ENCODE measurements at regions of chr14 and their contacts with region 1.

Region 1: GRCh38 chr14:37565550-37565949 is 29.5 kb downstream of the FOXA1 start:
- DNase-seq: peak in 1 of 2 experiments; percentile 54
- H3K4me3 ChIP-seq: peak overlapping the region; percentile 48
- H3K4me3 Mint-ChIP-seq: peak overlapping the region; percentile 88
- H3K27ac Mint-ChIP-seq: peak overlapping the region; percentile 84
- H3K4me1 ChIP-seq: peaks cover 68% of the 10 kb centered on the region
- H3K4me1 Mint-ChIP-seq: peaks cover 38% of the 10 kb centered on the region
- H3K27me3 ChIP-seq: no peaks in the 10 kb centered on the region
- H3K27me3 Mint-ChIP-seq: no peaks in the 10 kb centered on the region
- CTCF ChIP-seq: peak; percentile 67 to 68

Region 2: DNA sequence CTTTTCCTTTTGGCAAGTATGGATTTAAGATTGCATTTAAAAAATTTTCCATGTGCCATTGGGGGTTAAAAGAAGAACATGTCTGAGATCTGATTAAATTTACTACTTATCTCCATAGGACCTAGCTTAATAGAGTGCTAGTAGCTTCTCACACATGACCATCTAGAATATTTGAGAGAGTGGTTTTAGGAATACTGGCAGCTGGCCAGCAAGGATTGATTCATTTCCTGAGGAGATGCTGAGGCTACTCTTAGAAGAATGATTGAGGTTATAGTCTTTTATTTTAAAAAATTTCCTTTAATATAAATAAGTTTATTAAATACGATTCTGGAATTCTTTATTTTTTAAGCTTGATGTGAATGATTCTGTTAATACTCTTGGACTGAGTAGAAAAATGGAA is 311.6 kb before region 1 on chr14:
- CTCF ChIA-PET with region 1: no interaction called
- POLR2A ChIA-PET with region 1: no interaction called
- intact Hi-C with region 1: loop called (anchors 1 kb)
- DNase-seq: no peak
- H3K4me3 ChIP-seq: no peak overlapping the region
- H3K4me3 Mint-ChIP-seq: no peak overlapping the region
- H3K27ac Mint-ChIP-seq: no peak overlapping the region
- H3K4me1 ChIP-seq: peaks cover 35% of the 10 kb centered on the region
- H3K4me1 Mint-ChIP-seq: peaks cover 18% of the 10 kb centered on the region
- H3K27me3 ChIP-seq: no peaks in the 10 kb centered on the region
- H3K27me3 Mint-ChIP-seq: no peaks in the 10 kb centered on the region
- CTCF ChIP-seq: no peak

Region 3: DNA sequence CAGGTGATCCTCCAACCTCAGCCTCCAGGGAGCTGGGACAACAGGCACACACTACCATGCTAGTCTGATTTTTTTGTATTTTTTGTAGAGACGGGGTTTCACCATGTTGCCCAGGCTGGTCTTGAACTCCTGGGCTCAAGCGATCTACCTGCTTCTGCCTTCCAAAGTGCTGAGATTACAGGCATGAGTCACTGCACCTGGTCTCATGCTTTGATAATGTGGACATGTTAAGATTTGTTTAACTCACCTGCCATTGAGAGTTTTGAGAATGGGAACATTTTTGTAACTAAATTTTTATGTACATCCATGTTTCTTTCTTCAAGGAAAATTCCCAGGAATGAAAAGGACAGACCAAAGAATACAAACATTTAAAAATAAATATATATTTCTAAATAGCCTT is 246.6 kb before region 1 on chr14:
- CTCF ChIA-PET with region 1: no interaction called
- POLR2A ChIA-PET with region 1: no interaction called
- intact Hi-C with region 1: no loop called
- DNase-seq: no peak
- H3K4me3 ChIP-seq: no peak overlapping the region
- H3K4me3 Mint-ChIP-seq: no peak overlapping the region
- H3K27ac Mint-ChIP-seq: no peak overlapping the region
- H3K4me1 ChIP-seq: peaks cover 10% of the 10 kb centered on the region; the same call in 1 of the 2 replicates
- H3K4me1 Mint-ChIP-seq: peaks cover 10% of the 10 kb centered on the region
- H3K27me3 ChIP-seq: no peaks in the 10 kb centered on the region
- H3K27me3 Mint-ChIP-seq: no peaks in the 10 kb centered on the region
- CTCF ChIP-seq: no peak

Region 4: DNA sequence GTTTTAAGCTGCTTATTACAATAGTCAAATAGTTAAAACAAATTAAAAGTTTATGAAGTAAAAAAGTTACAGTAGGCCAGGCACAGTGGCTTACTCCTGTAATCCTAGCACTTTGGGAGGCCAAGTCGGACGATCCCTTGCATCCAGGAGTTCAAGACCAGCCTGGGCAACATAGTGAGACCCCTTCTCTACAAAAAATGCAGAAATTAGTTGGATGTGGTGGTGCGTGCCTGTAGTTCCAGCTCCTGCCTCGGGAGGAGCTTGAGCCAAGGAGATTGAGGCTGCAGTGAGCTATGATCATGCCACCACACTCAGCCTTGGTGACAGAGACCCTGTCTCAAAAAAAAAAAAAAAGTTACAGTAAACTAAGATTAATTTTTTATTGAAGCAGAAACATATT is 225.2 kb before region 1 on chr14:
- CTCF ChIA-PET with region 1: no interaction called
- POLR2A ChIA-PET with region 1: no interaction called
- intact Hi-C with region 1: loop called (anchors 5 kb)
- DNase-seq: peak in 1 of 2 experiments; percentile 6
- H3K4me3 ChIP-seq: no peak overlapping the region
- H3K4me3 Mint-ChIP-seq: no peak overlapping the region
- H3K27ac Mint-ChIP-seq: no peak overlapping the region
- H3K4me1 ChIP-seq: no peaks in the 10 kb centered on the region
- H3K4me1 Mint-ChIP-seq: peaks cover 2% of the 10 kb centered on the region
- H3K27me3 ChIP-seq: no peaks in the 10 kb centered on the region
- H3K27me3 Mint-ChIP-seq: no peaks in the 10 kb centered on the region
- CTCF ChIP-seq: no peak

Region 5: DNA sequence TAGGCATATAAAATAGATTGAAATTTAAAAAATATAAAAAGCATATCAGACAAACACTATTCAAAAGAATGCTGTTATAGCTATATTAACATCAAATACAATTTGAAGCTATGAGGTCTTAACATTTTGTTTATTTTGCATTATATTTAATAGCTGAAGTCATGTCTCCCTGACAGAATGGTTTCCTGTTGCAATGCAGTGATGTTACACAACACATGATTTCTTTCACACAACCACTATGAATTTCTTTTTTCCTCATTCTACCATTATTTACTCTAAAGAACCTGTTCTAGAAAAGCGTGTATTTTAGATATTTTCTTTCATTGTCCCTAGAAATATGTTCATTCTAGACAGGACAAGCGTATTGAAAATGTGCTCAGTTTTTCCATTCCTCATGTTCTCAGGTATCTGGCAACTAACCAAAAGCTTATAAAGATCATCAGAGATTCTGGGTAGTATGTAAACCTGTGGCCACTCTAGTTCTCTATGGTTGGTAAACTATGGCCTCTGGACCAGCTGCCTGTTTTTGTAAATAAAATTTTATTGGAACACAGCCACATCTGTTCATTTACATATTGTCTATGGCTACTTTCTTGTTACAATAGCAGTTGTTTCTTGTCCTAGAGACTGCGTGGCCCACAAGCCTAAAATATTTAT is 154.3 kb before region 1 on chr14:
- CTCF ChIA-PET with region 1: no interaction called
- POLR2A ChIA-PET with region 1: no interaction called
- intact Hi-C with region 1: loop called (anchors 1 kb)
- DNase-seq: no peak
- H3K4me3 ChIP-seq: no peak overlapping the region
- H3K4me3 Mint-ChIP-seq: no peak overlapping the region
- H3K27ac Mint-ChIP-seq: no peak overlapping the region
- H3K4me1 ChIP-seq: peaks cover 51% of the 10 kb centered on the region
- H3K4me1 Mint-ChIP-seq: peaks cover 21% of the 10 kb centered on the region
- H3K27me3 ChIP-seq: no peaks in the 10 kb centered on the region
- H3K27me3 Mint-ChIP-seq: no peaks in the 10 kb centered on the region
- CTCF ChIP-seq: no peak

Region 6: DNA sequence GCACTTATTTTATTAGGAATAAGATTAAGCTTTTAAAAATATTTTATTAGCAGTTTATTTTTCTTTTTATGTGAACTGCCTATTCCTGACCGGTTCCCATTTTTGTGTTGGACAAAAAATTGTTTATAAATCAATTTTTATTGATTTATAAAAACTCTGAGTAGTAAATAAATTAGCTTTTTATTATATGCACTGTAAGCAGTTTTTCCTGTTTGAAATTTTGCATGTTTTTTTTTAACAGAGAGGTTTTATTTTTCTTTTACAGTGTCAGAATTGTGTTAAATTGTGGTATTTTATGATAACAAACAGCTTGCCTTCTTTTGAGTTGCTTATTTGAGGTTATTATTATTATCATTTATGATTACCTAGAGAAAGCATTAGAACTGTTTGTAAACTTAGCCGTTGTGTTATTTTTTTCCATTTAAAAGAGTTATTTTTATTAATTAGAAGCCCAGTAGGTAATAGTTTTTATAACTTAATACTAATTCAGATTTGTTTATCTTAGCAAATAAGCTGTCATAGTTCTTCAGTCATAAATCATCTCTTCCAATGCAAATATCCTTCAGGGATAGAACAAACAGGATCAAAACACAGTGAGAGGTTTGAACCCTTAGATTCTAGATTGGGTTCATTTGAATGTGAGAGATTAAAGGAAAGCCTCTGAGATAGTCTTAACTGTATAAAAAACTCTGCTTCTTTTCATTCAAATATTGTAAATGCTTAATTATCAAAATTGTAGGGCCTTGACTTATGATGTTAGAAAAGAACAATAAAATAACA is 38.4 kb before region 1 on chr14:
- CTCF ChIA-PET with region 1: no interaction called
- POLR2A ChIA-PET with region 1: no interaction called
- intact Hi-C with region 1: no loop called
- DNase-seq: no peak
- H3K4me3 ChIP-seq: no peak overlapping the region
- H3K4me3 Mint-ChIP-seq: no peak overlapping the region
- H3K27ac Mint-ChIP-seq: no peak overlapping the region
- H3K4me1 ChIP-seq: peaks cover 11% of the 10 kb centered on the region
- H3K4me1 Mint-ChIP-seq: peaks cover 11% of the 10 kb centered on the region
- H3K27me3 ChIP-seq: no peaks in the 10 kb centered on the region
- H3K27me3 Mint-ChIP-seq: no peaks in the 10 kb centered on the region
- CTCF ChIP-seq: no peak

Region 7: DNA sequence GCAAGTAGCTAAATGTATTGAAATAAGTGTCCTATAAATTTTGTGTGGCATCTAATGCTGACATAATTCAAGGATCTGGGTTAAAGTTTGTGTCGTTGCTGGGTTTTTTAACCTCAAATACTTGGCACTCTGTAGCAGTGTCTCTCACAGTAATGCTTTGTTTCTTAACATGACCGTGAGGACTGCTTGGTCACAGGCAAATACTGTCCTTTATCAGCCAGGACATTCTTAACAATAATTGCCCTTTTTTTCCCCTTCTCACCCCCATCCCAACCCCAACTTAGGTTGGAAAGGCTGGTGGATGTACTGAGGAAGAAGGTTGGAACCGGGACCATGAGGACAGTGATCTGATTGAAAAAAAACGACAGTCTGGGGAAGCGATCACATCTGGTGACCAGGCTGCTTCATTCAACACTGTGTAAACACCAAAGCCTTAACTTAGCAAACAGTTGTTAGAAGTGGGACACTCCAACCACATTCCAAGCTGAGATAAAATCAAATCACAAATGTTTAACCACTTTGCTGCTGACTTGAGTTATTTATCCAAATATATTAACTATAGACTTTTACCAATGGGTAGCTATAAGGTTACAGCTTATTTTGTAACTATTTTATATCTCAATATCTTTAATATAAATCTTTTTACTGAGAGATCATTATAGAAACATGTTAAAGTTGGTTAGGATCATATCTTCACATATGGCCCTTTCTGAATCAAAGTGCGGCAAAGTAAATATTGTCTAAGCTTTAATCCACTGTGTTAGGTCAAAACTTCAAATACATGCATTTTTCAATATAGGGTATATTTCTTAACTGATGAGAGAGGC is 18.7 kb before region 1 on chr14:
- CTCF ChIA-PET with region 1: interaction called, 3 read pairs
- POLR2A ChIA-PET with region 1: no interaction called
- intact Hi-C with region 1: loop called (anchors 1 kb)
- DNase-seq: peak; percentile 81 to 92
- H3K4me3 ChIP-seq: no peak overlapping the region
- H3K4me3 Mint-ChIP-seq: peak overlapping the region; percentile 46
- H3K27ac Mint-ChIP-seq: peak overlapping the region; percentile 82
- H3K4me1 ChIP-seq: peaks cover 61% of the 10 kb centered on the region
- H3K4me1 Mint-ChIP-seq: peaks cover 16% of the 10 kb centered on the region
- H3K27me3 ChIP-seq: no peaks in the 10 kb centered on the region
- H3K27me3 Mint-ChIP-seq: no peaks in the 10 kb centered on the region
- CTCF ChIP-seq: no peak

Region 8: DNA sequence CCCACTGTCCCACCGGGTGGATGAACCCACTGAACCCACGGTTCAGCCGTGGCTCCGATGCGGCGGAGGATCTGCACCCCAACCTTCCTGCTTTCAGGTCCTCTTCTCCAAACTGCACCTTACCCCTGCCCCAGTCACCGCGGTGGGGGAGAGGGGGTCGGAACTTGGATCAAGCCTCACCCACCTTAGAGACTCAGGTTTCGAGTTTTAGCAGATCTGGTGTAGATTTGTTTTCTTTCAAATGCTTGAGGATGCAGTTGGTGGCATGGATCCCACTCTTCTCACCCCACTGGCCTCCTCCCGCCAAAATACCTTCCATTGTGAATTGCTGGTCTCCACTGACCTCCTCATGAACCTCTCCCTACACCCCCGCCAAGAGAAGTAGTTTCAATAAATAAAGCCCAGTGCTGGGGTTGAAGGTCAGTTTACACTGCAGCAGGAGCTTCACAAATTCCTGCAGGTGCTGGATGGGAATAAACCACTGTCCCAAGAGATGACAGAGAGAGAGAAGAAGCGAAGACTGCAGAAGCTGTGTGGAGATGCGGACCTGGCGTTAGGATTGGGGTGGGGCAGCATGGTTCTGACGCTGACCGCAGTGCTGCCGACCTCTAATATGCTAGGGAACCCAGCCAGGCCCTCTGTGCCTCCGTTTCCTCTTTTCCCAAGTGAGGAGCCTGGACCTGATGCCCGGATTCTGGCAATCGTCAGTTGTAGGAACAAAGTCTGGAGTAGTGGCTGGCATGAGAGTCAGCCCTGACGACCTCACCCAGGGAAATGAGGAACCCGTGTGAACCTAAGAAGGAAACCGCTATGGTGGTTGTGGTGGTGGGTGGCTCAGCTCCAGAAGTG is 37.3 kb after region 1 on chr14:
- CTCF ChIA-PET with region 1: no interaction called
- POLR2A ChIA-PET with region 1: no interaction called
- intact Hi-C with region 1: no loop called
- DNase-seq: peak; percentile 56 to 75
- H3K4me3 ChIP-seq: no peak overlapping the region
- H3K4me3 Mint-ChIP-seq: peak overlapping the region; percentile 48
- H3K27ac Mint-ChIP-seq: peak overlapping the region; percentile 19
- H3K4me1 ChIP-seq: peaks cover 33% of the 10 kb centered on the region
- H3K4me1 Mint-ChIP-seq: peaks cover 13% of the 10 kb centered on the region
- H3K27me3 ChIP-seq: no peaks in the 10 kb centered on the region
- H3K27me3 Mint-ChIP-seq: no peaks in the 10 kb centered on the region
- CTCF ChIP-seq: no peak

Region 9: DNA sequence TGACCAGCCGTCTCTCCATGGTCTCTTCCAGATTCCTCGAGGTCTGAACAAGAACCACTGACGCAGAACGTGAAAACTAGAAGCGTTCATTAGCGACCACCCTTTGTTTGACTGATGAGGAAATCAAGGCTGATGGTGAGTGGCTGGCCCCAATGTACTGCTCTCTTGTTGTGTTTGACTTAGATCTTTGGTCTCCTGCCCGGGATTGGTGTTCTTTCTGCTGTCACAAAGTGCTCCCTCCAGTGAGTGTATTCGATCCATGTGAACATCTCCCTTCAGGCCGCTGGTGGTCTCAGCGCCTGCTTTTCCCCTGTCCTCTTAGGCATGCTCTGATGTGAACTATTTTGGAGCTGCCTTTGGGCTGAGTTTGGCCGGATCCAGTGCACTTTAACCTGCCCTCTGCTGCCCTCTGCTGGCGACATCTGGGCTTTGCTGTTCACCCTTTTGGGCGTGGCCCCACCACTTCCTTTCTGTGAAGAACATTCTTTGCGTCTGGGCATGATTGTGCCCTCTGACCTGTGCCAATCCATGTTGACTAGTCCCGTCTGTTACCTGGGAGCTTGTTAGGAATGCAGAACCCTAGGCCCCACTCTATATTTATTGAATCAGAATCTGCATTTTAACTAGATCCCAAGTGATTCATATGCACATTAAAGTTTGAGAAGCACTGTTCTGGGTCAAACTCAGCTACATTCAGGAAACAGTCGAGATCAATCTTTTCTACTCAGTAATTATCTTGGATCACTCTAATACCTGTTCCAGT is 309.1 kb after region 1 on chr14:
- CTCF ChIA-PET with region 1: no interaction called
- POLR2A ChIA-PET with region 1: no interaction called
- intact Hi-C with region 1: loop called (anchors 1 kb)
- DNase-seq: peak; percentile 80 to 90
- H3K4me3 ChIP-seq: no peak overlapping the region
- H3K4me3 Mint-ChIP-seq: peak overlapping the region; percentile 9
- H3K27ac Mint-ChIP-seq: peak overlapping the region; percentile 36
- H3K4me1 ChIP-seq: peaks cover 9% of the 10 kb centered on the region; the same call in 1 of the 2 replicates
- H3K4me1 Mint-ChIP-seq: peaks cover 21% of the 10 kb centered on the region
- H3K27me3 ChIP-seq: no peaks in the 10 kb centered on the region
- H3K27me3 Mint-ChIP-seq: no peaks in the 10 kb centered on the region
- CTCF ChIP-seq: peak; percentile 83 to 87

Measured in Caco-2 (cell line).